Activated naive CD4-positive, alpha-beta T cell treated with anti-CD3 and anti-CD28 coated beads for 36 hours (primary cell): ENCODE measurements at regions of chr1 and their contacts with region 1.

Region 1: GRCh38 chr1:169367486-169368405 is at the starts of genes BLZF1 and NME7:
- DNase-seq: peak; percentile 99
- H3K4me3 Mint-ChIP-seq: peak within 1 kb of the TSS; percentile 50
- H3K27ac Mint-ChIP-seq: no peak within 1 kb of the TSS
- H3K4me1 Mint-ChIP-seq: peaks cover 30% of the 10 kb centered on the region
- H3K27me3 Mint-ChIP-seq: no peaks in the 10 kb centered on the region
- total RNA-seq, gene BLZF1: 5.6 to 6.0 TPM
- total RNA-seq, gene NME7: 7.1 to 8.5 TPM

Region 2: DNA sequence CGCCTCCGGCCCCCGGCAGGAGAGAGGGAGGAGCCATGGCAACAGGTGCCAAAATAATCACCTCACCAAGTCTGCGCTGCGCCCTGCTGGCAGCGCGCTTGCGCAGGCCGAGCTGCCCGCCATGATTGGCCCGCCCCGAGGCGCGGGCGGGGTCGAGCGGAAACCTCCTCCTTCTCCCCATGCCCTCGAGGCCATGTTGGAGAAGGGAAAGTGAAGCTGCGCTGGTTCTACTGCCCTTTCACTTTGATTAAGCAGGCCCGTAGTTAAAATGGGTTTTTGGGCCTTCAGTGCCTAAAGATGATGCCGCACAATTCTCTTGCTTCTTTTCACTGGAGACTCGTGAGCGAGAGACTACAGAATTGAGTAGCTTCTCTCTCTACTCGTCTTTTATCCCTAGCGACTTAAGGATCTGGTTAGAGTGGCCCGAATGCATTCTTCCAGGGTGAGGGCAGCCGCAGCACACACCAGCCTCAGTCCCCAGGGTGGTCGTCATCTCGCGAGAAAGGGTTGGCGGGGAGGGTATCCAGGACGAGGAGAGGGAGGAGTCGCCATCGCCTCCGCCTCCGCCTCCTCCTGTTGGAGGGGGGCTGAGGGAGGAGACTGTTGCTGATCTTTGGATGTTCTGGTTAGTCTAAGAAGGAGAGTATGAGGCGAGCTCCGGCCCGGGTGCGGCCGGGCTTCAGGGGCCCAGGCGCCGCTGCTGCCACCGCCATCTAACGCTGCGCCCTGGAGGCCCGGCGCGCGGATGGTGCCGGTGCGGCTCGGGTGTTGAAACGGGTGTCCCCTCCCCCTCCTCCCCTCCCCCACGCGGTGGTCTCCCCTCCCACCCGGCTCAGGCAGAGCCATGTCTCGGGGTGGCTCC is 1431.4 kb before region 1 on chr1 and contains the start of gene DCAF6:
- CTCF ChIA-PET with region 1: no interaction called
- intact Hi-C with region 1: loop called (anchors 1 kb)
- DNase-seq: peak; percentile 97
- H3K4me3 Mint-ChIP-seq: peak within 1 kb of the TSS; percentile 85
- H3K27ac Mint-ChIP-seq: peak within 1 kb of the TSS; percentile 100
- H3K4me1 Mint-ChIP-seq: peaks cover 32% of the 10 kb centered on the region
- H3K27me3 Mint-ChIP-seq: no peaks in the 10 kb centered on the region
- total RNA-seq, gene DCAF6: 15.4 to 15.9 TPM

Region 3: DNA sequence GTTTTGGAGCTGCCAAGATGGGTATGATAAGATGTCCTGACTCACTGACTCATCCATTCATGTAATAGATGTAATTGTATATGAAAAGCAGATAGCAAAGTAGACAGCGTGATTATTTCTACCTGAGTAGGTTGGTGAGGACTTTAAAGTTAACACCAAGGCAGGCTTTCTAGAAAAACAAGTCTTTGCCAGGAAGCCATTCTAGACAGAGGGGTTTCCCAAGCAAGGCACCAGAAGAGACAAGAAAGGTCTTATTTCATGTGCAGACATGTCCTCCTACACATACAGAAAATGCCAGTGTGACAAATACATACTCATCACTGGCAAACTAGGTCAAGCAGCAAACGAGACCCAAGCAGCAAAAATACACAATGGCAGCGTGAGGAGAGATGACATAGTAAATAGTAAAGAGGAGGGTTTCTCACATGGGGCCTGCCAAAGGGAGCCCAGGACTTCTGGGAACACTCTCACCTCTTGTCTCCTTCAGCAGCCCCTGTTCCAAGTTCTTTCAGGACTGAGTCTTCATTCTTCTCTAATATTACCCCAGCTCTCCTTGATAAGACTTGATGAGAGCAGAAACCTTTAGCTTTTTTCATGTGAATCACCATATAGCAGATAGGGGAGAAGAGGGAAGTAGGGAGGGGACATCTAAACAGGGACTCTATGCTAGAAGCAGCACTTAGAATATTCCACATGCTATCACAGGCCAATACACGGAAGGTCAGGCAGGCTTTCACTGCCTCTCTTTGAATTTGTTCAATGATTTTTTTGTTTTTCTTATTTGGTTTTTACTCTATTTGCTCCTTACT is 375.9 kb before region 1 on chr1:
- CTCF ChIA-PET with region 1: no interaction called
- intact Hi-C with region 1: loop called (anchors 1 kb)
- DNase-seq: peak; percentile 64
- H3K4me3 Mint-ChIP-seq: no peak overlapping the region
- H3K27ac Mint-ChIP-seq: peak overlapping the region; percentile 89
- H3K4me1 Mint-ChIP-seq: peaks cover 23% of the 10 kb centered on the region
- H3K27me3 Mint-ChIP-seq: peaks cover 3% of the 10 kb centered on the region

Region 4: DNA sequence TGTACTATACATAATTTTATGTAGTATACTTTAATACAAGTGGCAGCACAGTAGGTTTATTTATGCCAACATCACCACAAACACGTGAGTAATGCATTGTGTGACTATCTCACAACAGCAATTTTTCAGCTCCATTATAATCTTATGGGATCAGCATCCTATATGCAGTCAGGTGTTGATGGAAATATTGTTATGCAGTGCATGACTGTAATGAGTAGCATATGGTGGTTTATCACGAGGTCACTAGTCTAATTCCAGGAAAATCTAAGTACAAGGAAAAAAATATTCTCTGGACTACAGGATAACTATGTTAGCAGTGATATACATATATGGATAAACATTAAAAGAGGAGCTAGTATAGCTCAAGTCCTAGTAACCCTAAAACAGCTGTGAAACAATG is 192.3 kb before region 1 on chr1:
- CTCF ChIA-PET with region 1: no interaction called
- intact Hi-C with region 1: no loop called
- DNase-seq: no peak
- H3K4me3 Mint-ChIP-seq: no peak overlapping the region
- H3K27ac Mint-ChIP-seq: no peak overlapping the region
- H3K4me1 Mint-ChIP-seq: no peaks in the 10 kb centered on the region
- H3K27me3 Mint-ChIP-seq: no peaks in the 10 kb centered on the region

Region 5: GRCh38 chr1:169298441-169298840 is 69.3 kb before region 1 on chr1:
- CTCF ChIA-PET with region 1: no interaction called
- intact Hi-C with region 1: no loop called
- DNase-seq: no peak
- H3K4me3 Mint-ChIP-seq: no peak overlapping the region
- H3K27ac Mint-ChIP-seq: no peak overlapping the region
- H3K4me1 Mint-ChIP-seq: no peaks in the 10 kb centered on the region
- H3K27me3 Mint-ChIP-seq: no peaks in the 10 kb centered on the region

Region 6: DNA sequence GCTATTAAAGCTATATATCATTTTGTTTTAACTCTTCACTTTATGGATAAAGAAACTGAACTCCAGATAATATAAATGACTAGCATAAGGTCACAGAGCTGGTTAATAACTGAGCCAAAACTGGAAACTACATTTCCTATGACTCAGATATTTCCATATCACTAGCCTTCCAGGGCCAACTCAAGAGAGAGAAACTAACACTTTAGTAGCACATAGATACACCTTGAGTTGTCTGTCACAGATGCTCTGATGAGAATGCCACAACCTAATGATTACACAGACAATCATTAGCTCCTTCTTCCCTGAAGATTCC is 40.8 kb before region 1 on chr1:
- CTCF ChIA-PET with region 1: interaction called, 3 read pairs
- intact Hi-C with region 1: loop called (anchors 2 kb)
- DNase-seq: no peak
- H3K4me3 Mint-ChIP-seq: no peak overlapping the region
- H3K27ac Mint-ChIP-seq: no peak overlapping the region
- H3K4me1 Mint-ChIP-seq: peaks cover 18% of the 10 kb centered on the region
- H3K27me3 Mint-ChIP-seq: no peaks in the 10 kb centered on the region

Region 7: GRCh38 chr1:169586395-169587255 is 218.9 kb after region 1 on chr1 and contains the start of gene F5:
- CTCF ChIA-PET with region 1: interaction called, 3 read pairs
- intact Hi-C with region 1: loop called (anchors 2 kb)
- DNase-seq: peak; percentile 94
- H3K4me3 Mint-ChIP-seq: peak within 1 kb of the TSS; percentile 94
- H3K27ac Mint-ChIP-seq: peak within 1 kb of the TSS; percentile 97
- H3K4me1 Mint-ChIP-seq: peaks cover 60% of the 10 kb centered on the region
- H3K27me3 Mint-ChIP-seq: no peaks in the 10 kb centered on the region
- total RNA-seq, gene F5: 58.6 to 59.1 TPM

Region 8: GRCh38 chr1:169794530-169795416 is 427.0 kb after region 1 on chr1 and contains the start of gene METTL18:
- CTCF ChIA-PET with region 1: no interaction called
- intact Hi-C with region 1: loop called (anchors 1 kb)
- DNase-seq: peak; percentile 97
- H3K4me3 Mint-ChIP-seq: peak within 1 kb of the TSS; percentile 99
- H3K27ac Mint-ChIP-seq: peak within 1 kb of the TSS; percentile 99
- H3K4me1 Mint-ChIP-seq: peaks cover 48% of the 10 kb centered on the region
- H3K27me3 Mint-ChIP-seq: no peaks in the 10 kb centered on the region
- total RNA-seq, gene METTL18: 10.6 to 11.1 TPM